Lower leg skin (tissue), 4 donors: ENCODE measurements at regions of chr1 and their contacts with region 1.

Region 1: DNA sequence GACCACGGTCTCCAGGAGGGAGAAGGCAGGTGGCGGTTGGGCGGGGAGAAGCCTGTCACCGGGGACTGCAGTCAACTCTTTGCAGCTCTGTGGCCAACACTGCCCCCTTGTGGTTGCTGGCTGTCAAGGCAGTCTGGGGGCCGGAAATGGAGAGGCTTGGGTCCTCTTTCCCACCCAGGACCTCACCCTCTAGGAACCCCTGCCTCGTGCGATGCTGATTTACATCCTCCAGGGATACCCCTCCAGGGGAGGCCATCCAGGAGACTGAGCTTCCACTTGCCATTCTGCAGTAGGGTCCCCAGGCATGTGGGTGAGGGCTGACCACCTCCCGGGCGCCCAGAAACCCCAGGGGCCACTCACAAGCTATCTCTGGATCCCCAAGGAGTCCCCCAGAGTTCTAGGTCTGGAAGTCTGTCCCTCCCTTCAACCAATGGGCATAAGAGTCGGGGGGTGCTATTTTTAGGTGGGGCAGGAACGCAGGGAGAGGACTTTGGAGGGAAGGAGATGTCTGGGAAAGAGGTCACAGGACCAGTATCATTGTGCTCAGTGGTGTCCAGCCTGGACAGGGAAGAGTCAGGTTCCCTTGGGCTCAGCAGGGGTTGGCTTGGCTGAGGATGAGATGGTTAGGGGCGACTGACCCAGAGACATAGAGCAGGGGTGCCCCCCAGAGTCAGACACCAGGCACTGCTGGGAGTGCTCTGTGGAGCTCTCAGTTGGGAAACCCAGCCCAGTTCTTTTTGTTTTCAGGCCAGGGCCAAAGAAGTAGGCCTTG is 7.1 kb upstream of the GPR61 start:
- DNase-seq: peak; percentile 78 to 97
- H3K4me3 ChIP-seq: no peak overlapping the region
- CTCF ChIP-seq: peak in 1 of 3 donors; percentile 94
- POLR2A ChIP-seq: no peak

Region 2: GRCh38 chr1:109493805-109494539 is 38.6 kb before region 1 on chr1 and contains the start of gene CYB561D1:
- intact Hi-C with region 1: loop called (anchors 2 kb)
- DNase-seq: peak; percentile 78 to 96
- H3K4me3 ChIP-seq: peak within 1 kb of the TSS; percentile 69
- CTCF ChIP-seq: peak in 1 of 3 donors; percentile 62
- POLR2A ChIP-seq: no peak
- total RNA-seq, gene CYB561D1: 11.3 to 22.7 (median 17.8) TPM

Region 3: DNA sequence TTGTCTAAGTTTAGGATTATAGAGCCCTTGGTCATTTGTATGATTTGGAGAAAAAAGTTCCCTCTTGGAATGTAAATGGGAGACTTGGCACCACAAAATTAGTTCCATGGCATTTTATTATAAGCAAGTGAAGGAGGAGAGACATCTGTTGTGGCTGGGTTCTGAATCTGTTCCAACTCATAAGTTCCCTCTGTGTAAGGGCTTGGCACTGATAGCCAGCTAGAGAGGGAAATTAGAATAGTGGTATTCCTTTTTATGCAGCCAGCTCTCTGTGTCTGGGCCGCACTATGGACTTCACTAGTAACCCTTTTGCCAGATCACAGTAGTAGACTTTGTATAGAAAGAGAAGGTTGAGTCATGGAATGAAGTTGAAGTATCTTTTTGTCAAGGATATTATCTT is 46.9 kb after region 1 on chr1:
- intact Hi-C with region 1: no loop called
- DNase-seq: no peak
- H3K4me3 ChIP-seq: no peak overlapping the region
- CTCF ChIP-seq: no peak
- POLR2A ChIP-seq: no peak